Activated CD8-positive, alpha-beta memory T cell treated with anti-CD3 and anti-CD28 coated beads, Interleukin-2, amount 10 ng/mL, durations not matched to agents 7 days and 5 days (primary cell): ENCODE measurements at regions of chr17 and their contacts with region 1.

Region 1: GRCh38 chr17:7329374-7329996 is 350 bp upstream of the NEURL4 start:
- DNase-seq: peak; percentile 99
- ATAC-seq: peak; percentile 64
- H3K4me3 Mint-ChIP-seq: peak overlapping the region; percentile 96
- H3K27ac Mint-ChIP-seq: peak overlapping the region; percentile 97
- H3K4me1 Mint-ChIP-seq: peaks cover 33% of the 10 kb centered on the region
- H3K27me3 Mint-ChIP-seq: no peaks in the 10 kb centered on the region

Region 2: GRCh38 chr17:7314719-7315569 is 14.5 kb before region 1 on chr17 and contains the start of gene GPS2:
- CTCF ChIA-PET with region 1: interaction called, 14 read pairs
- DNase-seq: peak; percentile 96
- ATAC-seq: peak; percentile 87
- H3K4me3 Mint-ChIP-seq: peak within 1 kb of the TSS; percentile 80
- H3K27ac Mint-ChIP-seq: peak within 1 kb of the TSS; percentile 91
- H3K4me1 Mint-ChIP-seq: peaks cover 53% of the 10 kb centered on the region
- H3K27me3 Mint-ChIP-seq: no peaks in the 10 kb centered on the region
- total RNA-seq, gene GPS2: 83.7 to 85.1 TPM

Region 3: DNA sequence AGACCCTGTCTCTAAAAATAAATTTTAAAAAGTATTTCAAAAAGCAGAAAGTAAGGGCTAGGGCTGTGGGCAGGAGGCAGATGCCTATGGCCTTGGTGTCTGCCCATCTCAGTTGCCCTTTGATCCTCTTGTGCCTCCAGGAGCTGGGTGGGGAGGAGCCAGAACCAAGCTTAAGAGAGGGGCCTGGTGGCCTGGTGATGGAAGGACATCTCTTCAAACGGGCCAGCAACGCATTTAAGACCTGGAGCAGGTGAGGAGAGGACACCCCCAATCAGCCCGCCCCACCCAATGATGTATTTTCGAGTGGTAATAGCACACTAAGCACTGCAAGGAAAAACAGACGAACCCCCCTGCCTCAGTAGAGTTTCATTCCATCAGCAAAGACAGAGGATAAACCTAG is 14.9 kb after region 1 on chr17:
- CTCF ChIA-PET with region 1: interaction called, 61 read pairs
- DNase-seq: no peak
- ATAC-seq: no peak
- H3K4me3 Mint-ChIP-seq: no peak overlapping the region
- H3K27ac Mint-ChIP-seq: peak overlapping the region; percentile 7
- H3K4me1 Mint-ChIP-seq: peaks cover 23% of the 10 kb centered on the region
- H3K27me3 Mint-ChIP-seq: no peaks in the 10 kb centered on the region